ENCODE measurements at regions of chr18 and their contacts with region 1.

Region 1: DNA sequence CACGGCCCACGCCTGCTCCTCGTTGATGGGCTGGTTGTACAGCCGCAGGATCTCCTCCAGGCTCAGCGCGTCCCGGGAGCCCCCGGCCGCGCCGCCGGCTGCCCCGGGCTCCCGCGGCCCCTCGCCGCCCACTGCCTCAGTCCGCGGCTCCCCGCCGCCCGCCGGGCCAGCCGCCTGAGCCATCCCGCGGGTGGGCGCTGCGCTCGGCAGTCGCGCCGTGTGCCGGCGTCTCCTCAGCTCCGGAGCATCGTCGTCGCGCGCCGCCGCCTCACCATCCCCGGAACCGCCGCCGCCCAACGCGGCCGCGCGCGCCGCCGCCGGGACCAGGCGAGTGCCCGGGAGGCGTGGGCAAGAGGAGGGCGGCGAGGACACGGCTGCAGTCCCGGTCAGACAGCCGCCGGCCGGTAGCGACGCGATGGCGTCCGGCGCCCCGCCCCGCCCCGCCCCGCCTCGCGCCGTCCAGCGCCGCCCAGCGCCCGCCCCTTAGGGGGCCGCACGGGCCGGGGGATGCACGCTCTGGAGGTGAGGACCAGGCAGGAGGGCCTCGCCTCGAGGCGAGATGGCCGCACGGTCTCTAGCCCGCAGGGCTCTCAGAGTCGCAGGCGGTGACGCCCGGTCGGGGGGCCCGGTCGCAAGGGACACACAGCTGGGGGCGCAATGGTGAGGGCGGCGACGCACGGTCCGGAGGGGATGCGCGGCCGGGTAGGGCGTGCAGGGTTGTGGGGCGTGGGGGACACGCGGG is at the start of gene SPIRE1:
- DNase-seq: peak; percentile 68
- H3K4me3 Mint-ChIP-seq: peak within 1 kb of the TSS; percentile 86
- H3K27ac Mint-ChIP-seq: peak within 1 kb of the TSS; percentile 81
- H3K4me1 Mint-ChIP-seq: peaks cover 31% of the 10 kb centered on the region
- H3K27me3 Mint-ChIP-seq: no peaks in the 10 kb centered on the region
- CTCF ChIP-seq: no peak
- total RNA-seq, gene SPIRE1: 64.8 and 78.2 TPM in 2 replicates

Region 2: GRCh38 chr18:12408247-12408869 is 249.5 kb before region 1 on chr18:
- CTCF ChIA-PET with region 1: interaction called, 7 read pairs
- POLR2A ChIA-PET with region 1: interaction called, 29 read pairs
- intact Hi-C with region 1: no loop called
- DNase-seq: peak; percentile 39
- H3K4me3 Mint-ChIP-seq: peak overlapping the region; percentile 80
- H3K27ac Mint-ChIP-seq: peak overlapping the region; percentile 74
- H3K4me1 Mint-ChIP-seq: peaks cover 20% of the 10 kb centered on the region
- H3K27me3 Mint-ChIP-seq: peaks cover 18% of the 10 kb centered on the region
- CTCF ChIP-seq: no peak

Region 3: DNA sequence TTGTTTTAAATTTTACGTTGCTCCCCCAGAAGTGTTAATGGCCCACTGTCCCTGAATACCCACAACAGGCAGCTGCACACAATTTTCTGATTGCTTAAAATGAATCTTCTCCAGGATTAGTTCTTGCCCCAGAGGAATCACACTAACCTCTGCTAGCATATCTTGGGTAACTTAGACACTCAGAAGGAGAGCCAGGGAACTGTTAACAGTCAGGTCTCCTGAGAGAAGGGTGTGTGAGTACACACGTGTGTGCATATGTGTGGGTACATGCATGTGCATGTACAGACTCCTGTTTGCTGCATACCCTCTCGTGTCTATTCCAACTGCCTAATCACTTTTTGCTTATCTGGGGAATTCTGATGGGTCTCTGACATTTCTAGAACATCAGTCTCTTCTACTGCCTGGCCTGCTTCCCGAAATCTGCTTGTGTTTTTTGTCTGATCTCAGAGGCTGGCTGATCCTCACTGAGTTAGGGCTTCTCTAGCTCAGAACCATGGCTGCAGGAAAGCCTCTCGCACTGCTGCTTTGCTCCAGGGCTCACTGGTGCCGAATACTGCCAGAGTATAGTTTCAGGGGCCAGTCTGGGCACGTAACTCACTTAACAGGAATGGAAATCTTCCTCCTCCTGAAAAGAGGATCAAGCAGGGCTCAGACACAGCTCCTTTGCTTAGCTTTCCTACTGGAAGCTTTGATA is 187.3 kb before region 1 on chr18:
- CTCF ChIA-PET with region 1: no interaction called
- POLR2A ChIA-PET with region 1: interaction called, 4 read pairs
- intact Hi-C with region 1: loop called (anchors 5 kb)
- DNase-seq: peak; percentile 11
- H3K4me3 Mint-ChIP-seq: no peak overlapping the region
- H3K27ac Mint-ChIP-seq: peak overlapping the region; percentile 71
- H3K4me1 Mint-ChIP-seq: peaks cover 8% of the 10 kb centered on the region
- H3K27me3 Mint-ChIP-seq: no peaks in the 10 kb centered on the region
- CTCF ChIP-seq: no peak

Region 4: DNA sequence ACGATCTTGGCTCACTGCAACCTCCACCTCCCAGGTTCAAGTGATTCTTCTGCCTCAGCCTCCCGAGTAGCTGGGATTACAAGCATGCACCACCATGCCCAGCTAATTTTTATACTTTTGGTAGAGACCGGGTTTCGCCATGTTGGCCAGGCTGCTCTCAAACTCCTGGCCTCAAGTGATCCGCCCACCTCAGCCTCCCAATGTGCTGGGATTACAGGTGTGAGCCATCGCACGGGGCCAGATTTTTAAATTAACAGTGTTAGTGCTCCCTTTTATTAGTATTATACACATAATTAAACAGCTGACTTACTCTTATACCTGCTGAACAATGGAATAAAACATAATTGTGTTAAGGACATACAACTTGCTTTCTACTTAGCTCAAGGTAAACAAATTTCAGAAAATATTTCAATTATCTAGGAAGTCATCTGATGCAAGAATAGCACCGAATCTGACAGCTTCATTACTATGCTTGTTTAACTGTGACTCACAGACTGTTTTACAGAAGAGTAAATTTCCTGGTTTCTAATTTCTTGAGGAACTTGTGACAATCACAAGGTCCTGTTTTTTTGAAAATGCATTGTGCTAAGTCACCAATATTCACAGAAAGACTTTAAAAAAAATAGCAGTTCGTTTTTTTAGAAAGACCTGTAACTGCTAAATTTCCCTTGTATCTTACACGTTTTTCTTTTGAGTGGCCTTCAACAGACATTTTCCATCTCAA is 51.1 kb before region 1 on chr18:
- CTCF ChIA-PET with region 1: interaction called, 4 read pairs
- POLR2A ChIA-PET with region 1: interaction called, 19 read pairs
- intact Hi-C with region 1: loop called (anchors 2 kb)
- DNase-seq: peak; percentile 69
- H3K4me3 Mint-ChIP-seq: peak overlapping the region; percentile 58
- H3K27ac Mint-ChIP-seq: peak overlapping the region; percentile 99
- H3K4me1 Mint-ChIP-seq: peaks cover 54% of the 10 kb centered on the region
- H3K27me3 Mint-ChIP-seq: no peaks in the 10 kb centered on the region
- CTCF ChIP-seq: no peak

Region 5: DNA sequence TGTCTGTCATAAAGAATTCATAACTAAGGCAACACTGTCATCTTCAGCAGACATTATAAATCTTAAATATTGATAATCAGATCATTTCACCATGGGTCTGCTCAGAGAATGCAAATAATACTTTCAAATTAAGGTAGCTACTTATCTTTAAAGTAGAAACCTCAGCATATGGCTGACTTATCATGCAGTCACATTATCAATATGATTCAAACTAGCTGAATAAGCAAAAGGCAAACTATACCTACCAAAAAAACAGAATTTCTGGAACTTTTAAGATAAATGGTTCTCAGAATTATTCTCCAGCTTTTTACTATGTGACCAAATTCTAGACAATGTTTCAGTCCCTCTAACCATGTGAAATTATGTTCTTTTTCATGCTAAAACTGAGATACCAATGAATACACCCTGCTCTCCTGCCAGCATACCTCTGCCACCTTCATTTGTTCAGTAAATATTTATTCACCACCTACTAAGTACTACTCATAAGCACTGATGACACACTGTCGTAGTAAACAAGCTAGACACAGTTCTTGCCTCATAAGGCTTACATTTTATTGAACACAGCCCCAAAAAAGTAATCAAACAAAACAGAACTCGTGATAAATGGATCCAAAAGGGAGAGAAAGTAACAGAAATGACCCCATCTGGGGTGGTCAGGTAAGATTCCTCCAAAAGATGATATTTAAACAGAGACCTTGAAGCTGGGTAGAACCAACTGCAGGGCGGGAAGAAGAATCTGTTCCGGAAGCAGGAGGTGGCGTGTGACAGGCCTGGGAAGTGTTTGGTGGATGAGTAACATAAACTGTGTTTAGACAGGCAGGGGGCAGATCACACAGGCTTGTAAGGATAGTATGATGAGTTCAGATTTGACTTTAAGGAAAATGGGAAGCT is 17.6 kb before region 1 on chr18:
- CTCF ChIA-PET with region 1: interaction called, 3 read pairs
- POLR2A ChIA-PET with region 1: interaction called, 14 read pairs
- intact Hi-C with region 1: no loop called
- DNase-seq: peak; percentile 79
- H3K4me3 Mint-ChIP-seq: peak overlapping the region; percentile 36
- H3K27ac Mint-ChIP-seq: peak overlapping the region; percentile 92
- H3K4me1 Mint-ChIP-seq: peaks cover 45% of the 10 kb centered on the region
- H3K27me3 Mint-ChIP-seq: no peaks in the 10 kb centered on the region
- CTCF ChIP-seq: no peak

Region 6: GRCh38 chr18:12768625-12769024 is 110.8 kb after region 1 on chr18:
- CTCF ChIA-PET with region 1: no interaction called
- POLR2A ChIA-PET with region 1: no interaction called
- intact Hi-C with region 1: no loop called
- DNase-seq: peak; percentile 11
- H3K4me3 Mint-ChIP-seq: no peak overlapping the region
- H3K27ac Mint-ChIP-seq: no peak overlapping the region
- H3K4me1 Mint-ChIP-seq: peaks cover 6% of the 10 kb centered on the region
- H3K27me3 Mint-ChIP-seq: no peaks in the 10 kb centered on the region
- CTCF ChIP-seq: no peak